PC-9 (cell line): ENCODE measurements at regions of chr20 and their contacts with region 1.

Region 1: GRCh38 chr20:56689288-56689687 is 60.2 kb downstream of the TFAP2C start:
- DNase-seq: peak; percentile 84 to 98
- H3K4me3 ChIP-seq: peak overlapping the region; percentile 50
- H3K27ac ChIP-seq: peak overlapping the region; percentile 99
- H3K4me1 ChIP-seq: peaks cover 55% of the 10 kb centered on the region
- H3K27me3 ChIP-seq: no peaks in the 10 kb centered on the region
- CTCF ChIP-seq: no peak

Region 2: GRCh38 chr20:56646599-56646998 is 42.7 kb before region 1 on chr20:
- CTCF ChIA-PET with region 1: interaction called, 15 read pairs
- POLR2A ChIA-PET with region 1: no interaction called
- intact Hi-C with region 1: no loop called
- DNase-seq: no peak
- H3K4me3 ChIP-seq: no peak overlapping the region
- H3K27ac ChIP-seq: no peak overlapping the region
- H3K4me1 ChIP-seq: no peaks in the 10 kb centered on the region
- H3K27me3 ChIP-seq: no peaks in the 10 kb centered on the region
- CTCF ChIP-seq: no peak

Region 3: DNA sequence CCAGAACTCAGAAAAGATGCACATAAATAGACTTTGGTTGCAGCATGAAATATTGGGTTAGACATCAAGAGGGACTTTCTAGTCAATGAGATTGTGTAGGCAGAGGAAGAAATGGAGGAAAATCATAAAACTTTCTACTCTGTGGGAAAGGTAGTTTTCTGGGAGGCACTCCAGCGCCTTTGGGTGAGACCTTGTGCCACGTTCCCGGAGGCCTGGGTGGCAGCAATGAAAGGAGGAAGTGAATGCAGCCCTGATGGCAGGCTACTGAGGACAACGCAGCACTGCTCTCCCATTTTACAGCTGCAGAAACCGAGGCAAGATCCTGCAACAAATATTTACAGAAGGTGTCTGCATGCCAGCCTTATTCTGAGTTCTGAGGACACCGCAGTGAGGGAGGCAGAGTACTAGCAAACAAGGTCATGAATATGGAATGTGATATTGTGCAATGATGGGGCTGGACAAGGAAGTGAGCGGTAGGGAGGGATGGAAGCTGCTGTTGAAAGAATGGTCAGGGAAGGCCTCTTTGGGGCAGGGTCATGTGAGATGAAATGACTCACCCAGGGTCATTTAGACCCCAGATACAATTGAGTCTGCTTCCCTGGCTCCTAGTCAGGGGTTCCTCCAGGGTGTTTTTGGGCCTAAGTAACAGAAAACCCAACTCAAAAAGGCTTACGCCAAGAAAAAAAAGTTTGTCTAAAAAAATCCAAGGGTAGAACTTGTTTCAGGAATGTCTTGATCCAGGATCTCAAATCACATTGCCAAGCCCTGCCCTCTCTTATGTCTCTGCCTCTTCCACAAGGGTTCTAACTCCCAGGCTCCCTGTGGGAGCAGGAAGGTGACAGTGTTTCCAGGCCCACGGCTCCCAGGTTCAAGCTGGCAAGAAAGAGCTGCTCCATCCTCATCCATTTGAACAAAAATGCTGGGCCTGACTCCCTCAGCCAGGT is 99.0 kb after region 1 on chr20:
- CTCF ChIA-PET with region 1: no interaction called
- POLR2A ChIA-PET with region 1: interaction called, 3 read pairs
- intact Hi-C with region 1: loop called (anchors 1 kb)
- DNase-seq: peak; percentile 82 to 99
- H3K4me3 ChIP-seq: peak overlapping the region; percentile 12; the same call in 1 of the 2 replicates
- H3K27ac ChIP-seq: peak overlapping the region; percentile 96
- H3K4me1 ChIP-seq: peaks cover 46% of the 10 kb centered on the region
- H3K27me3 ChIP-seq: no peaks in the 10 kb centered on the region
- CTCF ChIP-seq: no peak